ENCODE measurements at regions of chr1 and their contacts with region 1.

Region 1: GRCh38 chr1:39538588-39539465 is 37.8 kb downstream of the PABPC4 start:
- DNase-seq: peak; percentile 93
- H3K4me3 ChIP-seq: no peak overlapping the region
- H3K27ac ChIP-seq: peak overlapping the region in 1 of 4 donors; percentile 71
- H3K4me1 ChIP-seq: peaks cover 4 to 13% (median 10%) of the 10 kb centered on the region in 4 donors
- H3K27me3 ChIP-seq: no peaks in the 10 kb centered on the region
- CTCF ChIP-seq: peak; percentile 88 to 94 (median 89)
- EP300 ChIP-seq: no peak
- POLR2A ChIP-seq: no peak

Region 2: DNA sequence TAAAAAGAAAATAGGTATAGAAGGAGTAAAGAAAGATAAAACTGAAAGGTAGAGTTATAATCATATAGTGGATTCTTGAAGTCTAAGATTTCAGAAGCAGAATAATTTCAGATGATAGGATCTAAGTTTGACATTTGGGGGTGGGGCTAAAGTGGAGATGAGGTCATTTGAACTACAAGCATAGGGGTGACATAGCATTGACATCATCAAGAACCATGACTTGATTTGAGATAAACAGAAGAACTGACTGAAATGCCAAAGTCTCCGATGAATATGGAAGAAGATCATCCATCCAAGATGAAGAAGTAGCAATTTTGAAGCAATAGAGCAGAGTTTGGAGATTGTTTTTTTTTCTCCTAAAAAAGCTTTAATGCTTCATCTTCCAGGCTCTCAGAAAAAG is 212.0 kb before region 1 on chr1:
- intact Hi-C with region 1: loop called (anchors 10 kb)
- DNase-seq: no peak
- H3K4me3 ChIP-seq: no peak overlapping the region
- H3K27ac ChIP-seq: peak overlapping the region; percentile 56 to 76 (median 66)
- H3K4me1 ChIP-seq: peaks cover 0 to 57% (median 32%) of the 10 kb centered on the region in 4 donors
- H3K27me3 ChIP-seq: no peaks in the 10 kb centered on the region
- CTCF ChIP-seq: no peak
- EP300 ChIP-seq: no peak
- POLR2A ChIP-seq: no peak